ENCODE measurements at regions of chr6 and their contacts with region 1.

Region 1: DNA sequence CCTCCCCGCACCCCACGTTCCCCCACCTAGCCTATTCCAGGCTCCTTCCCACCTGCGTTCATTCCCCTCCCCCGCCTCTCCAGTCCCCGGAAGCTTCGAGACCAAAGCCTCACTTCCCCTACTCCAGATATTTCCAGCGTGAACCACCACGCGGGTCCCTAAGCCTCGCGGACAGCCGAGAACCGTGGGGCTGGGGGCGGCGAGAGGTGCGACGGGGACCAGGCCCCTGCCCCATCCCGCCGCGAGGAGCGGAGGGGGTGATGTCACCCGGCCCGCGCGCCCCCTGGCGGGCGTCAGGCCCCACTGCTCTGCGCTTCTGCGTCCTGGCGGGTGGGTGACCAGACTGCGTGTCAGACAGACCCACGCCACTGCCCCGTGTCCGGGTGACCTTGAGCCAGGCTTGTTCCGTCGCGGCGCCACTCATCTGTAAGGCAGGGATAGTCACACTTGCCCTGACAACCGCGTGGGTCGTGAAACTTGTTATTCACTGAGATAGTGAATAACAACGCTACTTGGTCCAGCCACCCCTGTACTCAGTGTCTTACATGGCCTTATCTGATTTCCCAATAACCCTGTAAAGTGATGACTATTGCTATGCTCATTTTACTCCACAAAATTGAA is 9.0 kb upstream of the HSP90AB1 start:
- DNase-seq: no peak
- H3K4me3 ChIP-seq: peak overlapping the region; percentile 67
- CTCF ChIP-seq: peak; percentile 99

Region 2: GRCh38 chr6:43575772-43576551 is 662.0 kb before region 1 on chr6 and contains the starts of genes POLH and XPO5:
- CTCF ChIA-PET with region 1: no interaction called
- POLR2A ChIA-PET with region 1: no interaction called
- DNase-seq: no peak
- H3K4me3 ChIP-seq: peak within 1 kb of the TSS; percentile 98
- CTCF ChIP-seq: peak; percentile 10

Region 3: GRCh38 chr6:44111434-44112417 is 126.2 kb before region 1 on chr6:
- CTCF ChIA-PET with region 1: interaction called, 10 read pairs
- POLR2A ChIA-PET with region 1: no interaction called
- DNase-seq: no peak
- H3K4me3 ChIP-seq: no peak overlapping the region
- CTCF ChIP-seq: no peak

Region 4: DNA sequence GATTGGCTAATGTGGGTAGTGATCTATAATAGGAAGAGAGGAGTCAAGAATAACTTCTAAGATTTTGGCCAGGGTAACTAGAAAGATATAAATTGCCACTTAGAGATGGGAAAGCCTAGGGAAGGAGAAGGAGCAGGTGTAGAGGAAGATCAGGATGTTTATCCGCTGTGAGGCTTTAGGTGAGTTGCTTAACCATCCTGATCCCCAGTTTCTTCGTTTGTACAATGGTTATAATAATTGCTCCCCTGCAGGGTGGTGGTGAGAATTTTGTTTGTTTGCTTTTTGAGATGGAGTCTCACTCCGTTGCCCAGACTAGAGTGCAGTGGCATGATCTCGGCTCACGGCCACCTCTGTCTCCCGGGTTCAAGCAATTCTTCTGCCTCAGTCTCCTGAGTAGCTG is 23.6 kb before region 1 on chr6:
- CTCF ChIA-PET with region 1: interaction called, 15 read pairs
- POLR2A ChIA-PET with region 1: no interaction called
- DNase-seq: no peak
- H3K4me3 ChIP-seq: no peak overlapping the region
- CTCF ChIP-seq: no peak

Region 5: DNA sequence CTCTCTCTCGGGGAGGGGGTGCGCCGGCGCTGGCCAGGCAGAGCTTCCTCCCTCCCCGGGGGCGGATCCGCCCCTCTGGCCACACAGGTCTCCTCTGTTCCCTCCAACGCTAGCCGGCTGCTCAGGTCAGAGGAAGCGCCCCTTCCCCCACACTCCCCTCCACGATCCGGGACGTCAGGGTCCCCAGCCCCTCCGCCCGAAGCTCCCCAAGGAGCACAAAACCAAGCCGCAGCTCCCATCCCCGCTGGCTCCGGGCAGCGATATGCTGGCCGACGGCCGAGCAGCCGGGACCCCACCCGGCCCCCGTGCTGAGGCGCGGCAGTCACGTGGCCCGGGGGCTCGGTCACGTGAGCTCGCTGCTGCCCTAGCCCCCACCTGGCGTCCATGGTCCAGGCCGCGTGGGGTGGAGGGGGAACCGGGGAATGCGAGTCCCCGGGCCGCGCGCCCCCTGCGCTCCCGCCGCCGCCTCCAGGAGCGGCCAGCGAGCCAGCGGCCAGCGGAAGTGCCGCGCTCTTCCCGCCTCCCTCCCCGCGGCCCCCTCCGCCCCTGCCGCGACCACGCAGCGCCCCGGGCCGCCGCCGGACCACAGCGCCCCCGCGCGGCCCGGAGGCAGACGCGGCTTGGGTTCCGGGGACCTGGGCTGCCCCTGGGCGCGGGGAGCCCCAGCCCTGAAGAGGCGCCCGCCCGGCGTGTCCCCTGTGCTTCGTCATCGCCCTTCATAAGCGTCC is 19.3 kb after region 1 on chr6 and contains the start of gene SLC35B2:
- CTCF ChIA-PET with region 1: interaction called, 73 read pairs
- POLR2A ChIA-PET with region 1: interaction called, 3 read pairs
- DNase-seq: no peak
- H3K4me3 ChIP-seq: peak within 1 kb of the TSS; percentile 88
- CTCF ChIP-seq: peak; percentile 54

Region 6: DNA sequence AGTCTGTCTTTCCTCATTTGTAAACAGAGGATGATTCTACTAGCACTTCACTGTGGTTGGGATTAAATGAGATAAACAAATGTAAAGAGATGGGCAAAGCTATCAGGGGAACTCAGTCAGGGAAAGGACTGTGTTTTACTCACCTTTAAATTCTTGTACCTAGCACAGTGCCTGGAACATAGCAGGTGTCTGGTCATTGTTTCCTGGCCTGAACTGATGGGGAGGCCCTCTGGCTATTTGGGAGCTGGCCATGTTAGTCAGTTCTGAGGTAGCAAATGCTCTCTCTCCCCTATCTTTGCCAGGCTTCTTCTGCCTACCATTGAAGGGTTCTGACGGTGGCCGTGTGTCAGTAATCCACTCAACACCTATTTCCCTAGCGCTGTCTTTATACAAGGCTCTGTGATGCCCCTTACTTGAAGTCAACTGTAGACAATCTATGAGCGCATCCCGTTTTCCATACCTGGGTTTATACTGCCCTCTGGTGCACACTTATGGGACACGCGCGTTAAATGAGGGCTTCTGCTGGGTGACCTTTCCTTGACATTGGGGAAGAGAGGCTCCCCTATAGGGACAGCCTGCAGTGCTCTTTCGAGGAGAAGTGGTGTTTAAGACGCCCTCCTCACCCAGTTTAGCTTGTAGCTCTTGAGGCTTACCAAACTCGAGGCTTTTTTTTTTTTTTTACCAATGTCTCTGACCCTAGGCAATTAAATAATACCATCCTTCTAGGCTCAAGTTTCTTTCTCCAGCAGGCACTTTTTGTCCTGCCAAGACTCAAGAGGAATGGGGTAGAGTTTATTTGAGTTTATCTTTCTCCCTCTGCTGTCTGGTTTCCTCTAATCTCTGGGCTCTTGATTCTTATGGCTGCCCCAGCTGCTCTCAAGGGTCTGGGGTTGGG is 100.6 kb after region 1 on chr6:
- CTCF ChIA-PET with region 1: interaction called, 12 read pairs
- POLR2A ChIA-PET with region 1: no interaction called
- DNase-seq: no peak
- H3K4me3 ChIP-seq: no peak overlapping the region
- CTCF ChIP-seq: peak; percentile 75

Measured in AG04449 (cell line).